ENCODE measurements at regions of chr10 and their contacts with region 1.

Region 1: DNA sequence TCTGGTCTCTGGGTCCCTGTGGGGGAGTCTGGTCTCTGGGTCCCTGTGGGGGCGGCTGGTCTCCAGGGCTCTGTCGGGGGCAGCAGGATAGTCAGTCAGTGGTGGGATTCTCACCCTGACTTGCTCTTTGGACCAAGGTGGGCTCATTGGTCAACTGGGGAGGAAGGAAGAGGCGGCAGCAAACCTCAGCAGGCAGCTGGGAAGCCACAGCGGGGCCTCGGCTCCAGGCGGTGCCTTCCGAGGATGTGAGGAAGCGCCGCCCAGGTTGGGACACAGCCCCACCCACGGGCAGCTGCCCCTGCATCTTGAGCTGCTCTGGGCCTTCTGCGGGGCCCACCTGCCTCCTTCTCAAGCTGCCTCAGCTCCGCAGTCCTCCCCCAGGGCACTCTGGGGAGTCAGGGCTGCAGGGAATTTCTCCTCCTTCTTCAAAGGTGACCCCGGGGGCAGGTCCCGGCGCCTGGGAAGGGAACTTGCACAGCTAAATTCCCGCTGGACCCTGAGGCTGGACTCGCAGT is 20.4 kb upstream of the KNDC1 start:
- DNase-seq: no peak
- H3K4me3 ChIP-seq: no peak overlapping the region
- H3K4me3 Mint-ChIP-seq: no peak overlapping the region
- H3K27ac ChIP-seq: no peak overlapping the region
- H3K27ac Mint-ChIP-seq: no peak overlapping the region
- H3K4me1 ChIP-seq: no peaks in the 10 kb centered on the region
- H3K4me1 Mint-ChIP-seq: peaks cover 6% of the 10 kb centered on the region
- H3K27me3 ChIP-seq: no peaks in the 10 kb centered on the region
- H3K27me3 Mint-ChIP-seq: peaks cover 2 to 10% (median 6%) of the 10 kb centered on the region in 3 donors
- CTCF ChIP-seq: no peak

Region 2: GRCh38 chr10:133230387-133231195 is 91.0 kb after region 1 on chr10:
- intact Hi-C with region 1: loop called in 1 of 2 experiments (anchors 10 kb)
- DNase-seq: peak; percentile 68 to 80 (median 77)
- H3K4me3 ChIP-seq: peak overlapping the region in 1 of 3 experiments; percentile 54
- H3K4me3 Mint-ChIP-seq: peak overlapping the region; percentile 60 to 77
- H3K27ac ChIP-seq: no peak overlapping the region
- H3K27ac Mint-ChIP-seq: no peak overlapping the region
- H3K4me1 ChIP-seq: peaks cover 11 to 39% of the 10 kb centered on the region in 2 donors
- H3K4me1 Mint-ChIP-seq: peaks cover 25% of the 10 kb centered on the region
- H3K27me3 ChIP-seq: peaks cover 22 to 66% of the 10 kb centered on the region in 2 donors
- H3K27me3 Mint-ChIP-seq: peaks cover 65 to 76% (median 72%) of the 10 kb centered on the region in 3 donors
- CTCF ChIP-seq: no peak

Region 3: GRCh38 chr10:133318494-133319127 is 179.0 kb after region 1 on chr10:
- intact Hi-C with region 1: loop called (anchors 5 to 10 kb)
- DNase-seq: peak; percentile 61 to 70 (median 68)
- H3K4me3 ChIP-seq: peak overlapping the region in 2 of 3 experiments; percentile 10 to 56
- H3K4me3 Mint-ChIP-seq: peak overlapping the region; percentile 71 to 83
- H3K27ac ChIP-seq: no peak overlapping the region
- H3K27ac Mint-ChIP-seq: peak overlapping the region in 1 of 7 donors; percentile 63
- H3K4me1 ChIP-seq: peaks cover 6 to 7% of the 10 kb centered on the region in 2 donors
- H3K4me1 Mint-ChIP-seq: peaks cover 9% of the 10 kb centered on the region
- H3K27me3 ChIP-seq: peaks cover 0 to 13% of the 10 kb centered on the region in 2 donors
- H3K27me3 Mint-ChIP-seq: peaks cover 20 to 33% (median 28%) of the 10 kb centered on the region in 3 donors
- CTCF ChIP-seq: peak; percentile 94

Region 4: DNA sequence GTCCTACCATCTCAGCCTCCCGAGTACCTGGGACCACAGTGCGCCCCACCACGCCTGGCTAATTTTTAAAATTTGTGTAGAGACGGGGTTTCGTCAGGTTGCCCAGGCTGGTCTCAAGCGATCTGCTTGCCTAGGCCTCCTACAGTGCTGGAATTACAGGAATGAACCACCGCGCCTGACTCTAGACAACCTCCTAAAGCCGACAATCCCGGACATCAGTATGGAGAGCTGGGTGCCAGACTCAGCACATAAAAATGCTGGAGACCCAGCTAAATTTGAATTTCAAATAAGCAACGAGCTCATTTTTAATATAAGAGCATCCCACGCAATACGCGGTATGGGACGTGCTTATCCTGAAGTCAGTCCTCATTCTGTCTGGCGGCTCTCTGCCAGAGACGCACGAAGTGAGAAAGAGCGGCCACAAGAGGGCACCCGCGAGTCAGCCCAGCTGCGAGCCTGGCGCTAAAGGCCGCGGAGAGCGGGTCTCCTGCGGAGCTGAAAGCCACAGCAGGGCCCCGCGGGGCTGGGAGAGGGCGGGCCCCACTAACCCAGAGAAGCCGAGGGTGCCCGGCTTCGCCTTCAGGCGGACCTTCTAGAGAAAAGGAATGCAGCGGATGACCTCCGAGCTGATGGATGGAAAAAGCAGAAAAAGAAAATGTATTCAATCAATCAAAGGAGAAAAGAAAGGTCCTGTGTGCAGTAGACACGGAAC is 190.0 kb after region 1 on chr10:
- intact Hi-C with region 1: loop called in 1 of 2 experiments (anchors 10 kb)
- DNase-seq: peak; percentile 69 to 79 (median 75)
- H3K4me3 ChIP-seq: no peak overlapping the region
- H3K4me3 Mint-ChIP-seq: peak overlapping the region in 1 of 2 donors; percentile 78
- H3K27ac ChIP-seq: no peak overlapping the region
- H3K27ac Mint-ChIP-seq: peak overlapping the region in 1 of 7 donors; percentile 41
- H3K4me1 ChIP-seq: peaks cover 4 to 15% of the 10 kb centered on the region in 2 donors
- H3K4me1 Mint-ChIP-seq: peaks cover 5% of the 10 kb centered on the region
- H3K27me3 ChIP-seq: peaks cover 27 to 82% of the 10 kb centered on the region in 2 donors
- H3K27me3 Mint-ChIP-seq: peaks cover 80 to 89% (median 87%) of the 10 kb centered on the region in 3 donors
- CTCF ChIP-seq: peak; percentile 97